Heart left ventricle (tissue), 16 donors: ENCODE measurements at regions of chr6 and their contacts with region 1.

Region 1: DNA sequence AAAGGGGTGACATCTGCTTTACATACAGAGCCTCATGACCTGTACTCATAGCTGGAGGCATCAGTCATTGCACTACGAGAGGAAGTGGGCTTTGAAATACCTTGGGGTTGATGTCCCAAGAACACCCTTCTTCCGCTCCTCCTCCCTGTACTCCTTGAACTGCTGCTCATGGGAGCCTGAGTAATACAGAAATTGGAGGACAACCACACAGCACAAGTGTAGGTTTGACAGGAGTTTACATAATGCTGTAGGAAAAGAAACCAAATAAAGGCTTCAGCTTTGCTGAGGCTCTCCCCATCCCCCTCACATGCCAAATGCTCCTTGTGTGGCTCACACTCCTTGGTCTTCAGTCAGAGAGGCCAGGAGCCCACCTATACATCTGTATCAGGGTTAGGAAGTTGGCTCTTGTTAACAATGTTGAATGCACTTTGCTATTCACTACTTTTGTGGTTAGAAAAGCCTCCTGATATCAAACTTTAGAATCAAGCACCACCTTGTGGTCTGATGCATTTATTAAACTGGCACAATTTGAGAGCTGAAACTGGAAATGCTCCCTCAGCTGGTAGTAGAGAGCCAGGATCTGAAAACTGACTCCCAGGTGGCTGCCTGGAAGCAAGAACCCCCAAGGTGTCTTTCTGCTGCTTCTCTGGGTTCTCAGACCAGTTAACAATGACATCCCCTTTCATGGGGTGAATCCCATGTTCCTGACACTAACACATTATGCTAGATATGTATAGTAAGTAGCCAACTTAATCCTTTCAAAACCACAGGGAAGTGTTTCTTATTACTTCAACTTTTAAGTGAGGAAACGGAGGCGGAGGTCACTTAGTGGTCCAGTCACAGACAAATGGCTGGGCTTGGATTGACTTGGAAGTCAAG is 56.2 kb upstream of the EDN1 start:
- DNase-seq: peak in 1 of 5 donors; percentile 31
- ATAC-seq: peak in 3 of 4 donors; percentile 52 to 66 (median 60)
- H3K4me3 ChIP-seq: no peak overlapping the region
- H3K27ac ChIP-seq: peak overlapping the region in 1 of 12 donors; percentile 11
- H3K4me1 ChIP-seq: peaks cover 0 to 42% (median 0%) of the 10 kb centered on the region in 12 donors
- H3K27me3 ChIP-seq: no peaks in the 10 kb centered on the region
- CTCF ChIP-seq: peak; percentile 58 to 80 (median 68)
- POLR2A ChIP-seq: no peak

Region 2: DNA sequence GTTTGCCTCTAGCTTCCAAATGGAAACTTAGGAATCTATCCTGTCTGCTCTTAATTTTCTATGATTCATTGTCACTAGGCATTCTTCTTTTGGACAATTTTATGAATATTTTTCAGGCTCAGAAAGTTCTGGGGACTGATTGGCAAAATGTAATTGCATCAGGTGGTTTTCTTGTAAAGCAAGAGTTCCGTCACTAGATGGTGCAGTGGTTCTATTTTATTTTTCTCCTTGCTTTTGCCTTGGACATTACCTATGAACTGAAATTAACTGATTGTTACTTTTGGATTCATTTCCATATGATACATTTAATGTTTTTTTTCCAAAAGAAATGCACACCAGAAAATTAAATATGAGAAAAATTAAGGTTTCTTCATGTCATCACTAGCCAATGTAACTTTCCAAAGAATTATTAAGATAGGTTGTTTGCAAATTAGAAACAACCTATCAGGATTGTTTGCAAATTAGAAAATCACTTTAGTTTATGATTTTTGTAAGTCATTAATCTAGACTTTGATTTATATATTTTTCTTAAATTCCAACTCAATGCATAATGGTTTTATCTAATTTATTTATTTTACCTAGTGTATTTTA is 648.4 kb before region 1 on chr6:
- intact Hi-C with region 1: loop called (anchors 5 to 10 kb)
- DNase-seq: no peak
- ATAC-seq: peak in 1 of 4 donors; percentile 41
- H3K4me3 ChIP-seq: no peak overlapping the region
- H3K27ac ChIP-seq: no peak overlapping the region
- H3K4me1 ChIP-seq: peaks cover 0 to 5% (median 0%) of the 10 kb centered on the region in 12 donors
- H3K27me3 ChIP-seq: no peaks in the 10 kb centered on the region
- CTCF ChIP-seq: peak; percentile 47 to 75 (median 70)
- POLR2A ChIP-seq: no peak

Region 3: GRCh38 chr6:11700118-11700718 is 533.7 kb before region 1 on chr6:
- intact Hi-C with region 1: loop called in 6 of 10 experiments (anchors 5 to 10 kb)
- DNase-seq: no peak
- ATAC-seq: no peak
- H3K4me3 ChIP-seq: no peak overlapping the region
- H3K27ac ChIP-seq: no peak overlapping the region
- H3K4me1 ChIP-seq: peaks cover 0 to 5% (median 0%) of the 10 kb centered on the region in 12 donors
- H3K27me3 ChIP-seq: no peaks in the 10 kb centered on the region
- CTCF ChIP-seq: peak; percentile 26 to 68 (median 46)
- POLR2A ChIP-seq: no peak

Region 4: GRCh38 chr6:11824986-11825385 is 408.9 kb before region 1 on chr6:
- intact Hi-C with region 1: loop called in 3 of 10 experiments (anchors 10 kb)
- DNase-seq: no peak
- ATAC-seq: no peak
- H3K4me3 ChIP-seq: no peak overlapping the region
- H3K27ac ChIP-seq: no peak overlapping the region
- H3K4me1 ChIP-seq: peaks cover 0 to 5% (median 0%) of the 10 kb centered on the region in 12 donors
- H3K27me3 ChIP-seq: no peaks in the 10 kb centered on the region
- CTCF ChIP-seq: no peak
- POLR2A ChIP-seq: no peak

Region 5: DNA sequence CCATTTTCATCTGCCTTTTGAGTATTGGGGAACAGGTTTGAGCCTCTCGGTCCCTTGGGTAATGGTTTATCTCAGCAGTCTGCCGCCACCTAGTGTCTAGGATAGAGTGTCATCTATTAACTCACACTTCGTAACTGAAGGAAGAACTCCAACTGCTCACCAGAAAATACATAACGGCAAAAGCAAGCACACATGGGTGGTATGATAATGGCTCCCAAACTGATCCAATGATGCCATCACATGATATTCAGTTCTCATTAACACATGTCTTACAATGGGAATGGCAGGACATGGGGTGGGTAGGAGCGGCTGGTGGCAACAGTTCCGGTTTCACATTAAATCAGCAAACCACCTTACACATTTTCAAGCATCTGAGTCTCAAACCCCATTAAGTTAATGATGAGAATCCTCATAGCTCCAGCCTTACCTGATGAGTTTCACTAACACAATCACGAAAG is 372.0 kb after region 1 on chr6:
- intact Hi-C with region 1: loop called in 1 of 10 experiments (anchors 2 kb)
- DNase-seq: peak in 4 of 5 donors; percentile 30 to 40 (median 35)
- ATAC-seq: peak; percentile 63 to 83 (median 77)
- H3K4me3 ChIP-seq: no peak overlapping the region
- H3K27ac ChIP-seq: no peak overlapping the region
- H3K4me1 ChIP-seq: peaks cover 0 to 25% (median 3%) of the 10 kb centered on the region in 12 donors
- H3K27me3 ChIP-seq: no peaks in the 10 kb centered on the region
- CTCF ChIP-seq: peak; percentile 43 to 77 (median 65)
- POLR2A ChIP-seq: no peak